ENCODE measurements at regions of chr15 and their contacts with region 1.

Region 1: GRCh38 chr15:80058851-80059785 is at the start of gene ZFAND6:
- DNase-seq: peak; percentile 95
- H3K4me3 Mint-ChIP-seq: peak within 1 kb of the TSS; percentile 87
- H3K27ac Mint-ChIP-seq: peak within 1 kb of the TSS; percentile 84
- H3K4me1 Mint-ChIP-seq: peaks cover 16% of the 10 kb centered on the region
- H3K27me3 Mint-ChIP-seq: no peaks in the 10 kb centered on the region
- CTCF ChIP-seq: no peak
- total RNA-seq, gene ZFAND6: 57.6 and 59.5 TPM in 2 replicates

Region 2: GRCh38 chr15:79923515-79924395 is 135.4 kb before region 1 on chr15:
- CTCF ChIA-PET with region 1: no interaction called
- POLR2A ChIA-PET with region 1: interaction called, 43 read pairs
- intact Hi-C with region 1: no loop called
- DNase-seq: peak; percentile 96
- H3K4me3 Mint-ChIP-seq: peak overlapping the region; percentile 97
- H3K27ac Mint-ChIP-seq: peak overlapping the region; percentile 97
- H3K4me1 Mint-ChIP-seq: peaks cover 8% of the 10 kb centered on the region
- H3K27me3 Mint-ChIP-seq: peaks cover under 1% of the 10 kb centered on the region
- CTCF ChIP-seq: no peak

Region 3: DNA sequence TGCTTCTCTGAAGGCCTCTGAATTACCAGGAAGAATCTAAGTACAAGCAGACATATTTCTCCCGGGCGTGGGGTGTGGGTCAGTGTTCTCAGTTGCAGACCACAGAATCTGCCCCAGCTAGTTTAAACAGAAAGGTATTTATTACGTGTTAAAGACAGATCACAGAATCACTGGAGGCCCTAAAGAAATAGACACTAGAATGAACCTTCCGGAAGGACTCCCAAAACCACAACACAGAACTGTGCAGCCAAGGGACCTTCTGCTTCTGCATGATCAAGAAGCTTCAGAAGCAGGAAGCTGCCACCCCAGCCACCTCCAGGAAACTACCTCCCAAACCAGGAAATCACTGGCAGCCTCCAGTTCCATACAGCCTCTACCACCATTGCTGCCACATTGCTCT is 32.4 kb before region 1 on chr15:
- CTCF ChIA-PET with region 1: no interaction called
- POLR2A ChIA-PET with region 1: no interaction called
- intact Hi-C with region 1: no loop called
- DNase-seq: no peak
- H3K4me3 Mint-ChIP-seq: no peak overlapping the region
- H3K27ac Mint-ChIP-seq: no peak overlapping the region
- H3K4me1 Mint-ChIP-seq: peaks cover 9% of the 10 kb centered on the region
- H3K27me3 Mint-ChIP-seq: peaks cover 10% of the 10 kb centered on the region
- CTCF ChIP-seq: no peak

Region 4: DNA sequence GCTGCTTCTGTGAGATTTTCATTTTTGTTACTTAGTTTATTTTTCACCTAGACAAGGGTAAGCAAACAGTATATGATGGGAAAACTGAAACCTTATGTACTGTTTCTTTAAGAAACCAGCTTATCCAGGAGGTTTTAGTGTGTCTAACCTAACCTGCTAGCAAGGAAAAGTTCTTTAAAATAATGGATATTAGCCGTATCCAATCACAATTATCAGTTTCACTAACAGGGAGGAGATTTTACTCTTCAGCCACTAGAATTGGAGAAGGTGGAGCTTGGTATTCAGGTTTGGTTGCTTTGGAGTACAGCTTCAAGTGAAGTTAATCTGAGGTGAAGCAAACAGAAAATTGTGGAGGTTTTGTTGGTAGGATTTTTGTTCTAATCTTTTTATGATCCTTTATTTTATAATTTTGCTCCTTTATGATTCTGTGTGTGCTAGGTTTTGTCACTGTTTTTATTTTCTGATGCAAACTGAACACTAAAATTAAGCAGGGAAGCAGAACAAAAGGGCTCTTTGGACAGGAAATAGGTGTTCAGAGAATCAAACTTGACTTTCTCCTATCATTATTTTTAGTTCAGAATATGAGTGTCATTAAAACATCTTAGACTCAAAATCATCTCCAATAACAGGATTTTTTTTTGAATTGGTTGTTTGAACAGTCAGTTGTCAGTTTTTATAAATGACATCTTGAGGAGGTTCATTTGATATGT is 13.3 kb after region 1 on chr15:
- CTCF ChIA-PET with region 1: interaction called, 3 read pairs
- POLR2A ChIA-PET with region 1: interaction called, 174 read pairs
- intact Hi-C with region 1: no loop called
- DNase-seq: peak; percentile 89
- H3K4me3 Mint-ChIP-seq: peak overlapping the region; percentile 82
- H3K27ac Mint-ChIP-seq: peak overlapping the region; percentile 76
- H3K4me1 Mint-ChIP-seq: peaks cover 21% of the 10 kb centered on the region
- H3K27me3 Mint-ChIP-seq: no peaks in the 10 kb centered on the region
- CTCF ChIP-seq: no peak

Region 5: GRCh38 chr15:80152180-80152845 is 93.2 kb after region 1 on chr15:
- CTCF ChIA-PET with region 1: interaction called, 5 read pairs
- POLR2A ChIA-PET with region 1: interaction called, 39 read pairs
- intact Hi-C with region 1: no loop called
- DNase-seq: peak; percentile 94
- H3K4me3 Mint-ChIP-seq: peak overlapping the region; percentile 87
- H3K27ac Mint-ChIP-seq: no peak overlapping the region
- H3K4me1 Mint-ChIP-seq: no peaks in the 10 kb centered on the region
- H3K27me3 Mint-ChIP-seq: no peaks in the 10 kb centered on the region
- CTCF ChIP-seq: no peak

Region 6: GRCh38 chr15:80202641-80203360 is 143.7 kb after region 1 on chr15:
- CTCF ChIA-PET with region 1: no interaction called
- POLR2A ChIA-PET with region 1: interaction called, 15 read pairs
- intact Hi-C with region 1: no loop called
- DNase-seq: peak; percentile 85
- H3K4me3 Mint-ChIP-seq: no peak overlapping the region
- H3K27ac Mint-ChIP-seq: peak overlapping the region; percentile 21
- H3K4me1 Mint-ChIP-seq: peaks cover 12% of the 10 kb centered on the region
- H3K27me3 Mint-ChIP-seq: no peaks in the 10 kb centered on the region
- CTCF ChIP-seq: no peak

Measured in MCF 10A (cell line).